ENCODE measurements at regions of chr15 and their contacts with region 1.

Region 1: GRCh38 chr15:65318870-65319356 is 14.4 kb downstream of the RNU5B-1 start:
- DNase-seq: peak; percentile 89
- CTCF ChIP-seq: peak; percentile 86

Region 2: DNA sequence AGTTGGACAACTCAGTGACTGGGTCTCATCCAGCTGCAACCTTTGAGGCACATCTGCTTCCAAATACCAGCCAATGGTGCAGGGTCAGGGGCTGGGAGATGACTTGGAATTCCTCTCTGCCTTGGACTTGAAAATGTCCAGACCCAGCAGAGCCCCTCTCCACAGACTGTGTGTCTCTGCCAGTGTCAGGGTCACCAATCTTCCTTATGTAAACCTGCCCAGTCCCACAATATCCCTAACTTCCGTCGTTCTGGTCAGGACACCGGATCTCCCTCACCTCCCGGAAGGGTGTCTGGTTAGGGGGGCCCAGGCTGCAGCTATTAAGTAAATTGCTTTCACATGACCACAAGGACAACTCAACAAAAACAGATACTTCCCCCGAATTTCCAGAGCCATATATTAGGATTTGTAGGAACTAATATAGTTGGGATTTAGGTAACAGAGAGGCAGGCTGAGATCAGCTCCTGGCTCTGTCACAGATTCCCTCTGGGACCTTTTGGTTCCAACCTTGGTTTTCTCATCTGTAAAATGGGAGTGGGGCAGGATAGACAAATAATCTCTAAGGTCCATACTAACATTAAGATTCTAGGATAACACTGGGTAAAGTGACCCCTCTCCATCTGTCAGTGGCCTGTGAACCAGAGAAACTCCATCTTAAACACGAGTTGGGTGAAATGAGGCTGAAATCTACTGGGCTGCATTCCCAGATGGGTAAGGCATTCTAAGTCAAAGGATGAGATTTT is 28.1 kb after region 1 on chr15:
- CTCF ChIA-PET with region 1: no interaction called
- POLR2A ChIA-PET with region 1: no interaction called
- DNase-seq: no peak
- CTCF ChIP-seq: no peak

Region 3: DNA sequence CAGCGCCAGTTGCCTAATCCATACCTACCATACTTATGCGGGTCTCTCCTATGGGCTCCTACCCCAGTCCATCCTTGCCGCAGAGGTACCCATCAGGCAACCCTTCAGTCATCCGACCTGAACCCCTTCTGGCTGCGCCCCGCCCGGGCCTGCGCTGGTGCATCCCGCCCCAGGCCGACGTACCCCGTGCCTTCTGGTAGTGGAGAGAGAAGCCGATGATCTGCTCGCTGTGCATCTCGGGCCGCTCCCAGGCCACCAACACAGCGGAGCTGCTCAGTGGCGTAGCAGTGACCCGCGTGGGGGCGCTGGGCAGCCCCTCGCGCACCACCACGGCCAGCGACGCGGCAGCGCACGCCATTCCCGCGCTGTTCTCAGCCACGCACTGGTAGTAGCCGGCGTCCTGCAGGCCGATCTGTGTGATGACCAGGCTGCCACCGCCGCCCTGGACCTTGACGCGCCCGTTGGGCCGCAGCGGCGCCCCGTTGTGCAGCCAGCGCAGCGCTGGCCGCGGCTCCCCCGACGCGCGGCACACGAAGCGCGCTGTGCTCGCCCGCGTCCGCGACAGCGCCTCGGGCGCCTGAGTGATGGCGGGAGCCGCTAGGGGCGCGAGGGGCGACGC is 76.8 kb after region 1 on chr15:
- CTCF ChIA-PET with region 1: interaction called, 47 read pairs
- POLR2A ChIA-PET with region 1: no interaction called
- DNase-seq: no peak
- CTCF ChIP-seq: no peak